Activated CD8-positive, alpha-beta T cell treated with anti-CD3 and anti-CD28 coated beads, Interleukin-2, amount 10 ng/mL, durations not matched to agents 7 days and 5 days (primary cell): ENCODE measurements at regions of chr4 and their contacts with region 1.

Region 1: GRCh38 chr4:99054428-99054994 is 34.1 kb downstream of the ADH5 start:
- DNase-seq: no peak
- ATAC-seq: no peak
- H3K4me3 Mint-ChIP-seq: no peak overlapping the region
- H3K27ac Mint-ChIP-seq: no peak overlapping the region
- H3K4me1 Mint-ChIP-seq: peaks cover 32% of the 10 kb centered on the region
- H3K27me3 Mint-ChIP-seq: no peaks in the 10 kb centered on the region

Region 2: DNA sequence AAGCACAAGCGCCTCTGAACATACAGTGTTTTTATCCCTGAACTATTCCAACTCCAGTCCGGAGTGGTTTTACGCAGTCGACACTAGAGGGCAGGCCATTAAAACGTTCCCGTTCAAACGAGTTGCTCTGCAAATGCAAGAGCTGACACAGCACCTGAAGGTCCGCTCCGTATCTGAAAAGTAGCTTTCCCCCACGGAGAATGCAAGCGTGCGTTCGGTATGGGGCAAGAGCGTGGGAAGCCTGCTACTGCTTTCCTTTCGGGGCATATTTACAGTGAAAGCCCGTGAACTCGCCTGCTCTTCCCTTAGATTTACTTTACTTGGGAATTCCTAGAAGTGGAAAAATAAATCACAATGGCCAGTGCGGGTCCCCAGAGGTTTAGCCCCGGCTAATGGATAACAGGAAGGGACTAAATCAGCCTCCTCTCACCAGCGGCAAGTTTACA is 586.9 kb before region 1 on chr4:
- CTCF ChIA-PET with region 1: interaction called, 14 read pairs
- POLR2A ChIA-PET with region 1: no interaction called
- DNase-seq: peak; percentile 81
- ATAC-seq: peak; percentile 92
- H3K4me3 Mint-ChIP-seq: peak overlapping the region; percentile 62
- H3K27ac Mint-ChIP-seq: peak overlapping the region; percentile 69
- H3K4me1 Mint-ChIP-seq: peaks cover 33% of the 10 kb centered on the region
- H3K27me3 Mint-ChIP-seq: no peaks in the 10 kb centered on the region

Region 3: GRCh38 chr4:99028187-99028586 is 26.3 kb before region 1 on chr4:
- CTCF ChIA-PET with region 1: interaction called, 19 read pairs
- POLR2A ChIA-PET with region 1: interaction called, 3 read pairs
- DNase-seq: no peak
- ATAC-seq: no peak
- H3K4me3 Mint-ChIP-seq: no peak overlapping the region
- H3K27ac Mint-ChIP-seq: no peak overlapping the region
- H3K4me1 Mint-ChIP-seq: peaks cover 16% of the 10 kb centered on the region
- H3K27me3 Mint-ChIP-seq: no peaks in the 10 kb centered on the region

Region 4: GRCh38 chr4:99067617-99068016 is 13.1 kb after region 1 on chr4:
- CTCF ChIA-PET with region 1: interaction called, 21 read pairs
- POLR2A ChIA-PET with region 1: interaction called, 4 read pairs
- DNase-seq: no peak
- ATAC-seq: no peak
- H3K4me3 Mint-ChIP-seq: no peak overlapping the region
- H3K27ac Mint-ChIP-seq: no peak overlapping the region
- H3K4me1 Mint-ChIP-seq: no peaks in the 10 kb centered on the region
- H3K27me3 Mint-ChIP-seq: no peaks in the 10 kb centered on the region

Region 5: GRCh38 chr4:99405433-99406115 is 351.1 kb after region 1 on chr4:
- CTCF ChIA-PET with region 1: interaction called, 10 read pairs
- POLR2A ChIA-PET with region 1: no interaction called
- DNase-seq: peak; percentile 68
- ATAC-seq: peak; percentile 71
- H3K4me3 Mint-ChIP-seq: no peak overlapping the region
- H3K27ac Mint-ChIP-seq: no peak overlapping the region
- H3K4me1 Mint-ChIP-seq: peaks cover 19% of the 10 kb centered on the region
- H3K27me3 Mint-ChIP-seq: peaks cover 8% of the 10 kb centered on the region